Cardiac septum (tissue), 1 donor: ENCODE measurements at regions of chr5 and their contacts with region 1.

Region 1: GRCh38 chr5:126044111-126044668 is 379.0 kb upstream of the GRAMD2B start:
- DNase-seq: no peak

Region 2: DNA sequence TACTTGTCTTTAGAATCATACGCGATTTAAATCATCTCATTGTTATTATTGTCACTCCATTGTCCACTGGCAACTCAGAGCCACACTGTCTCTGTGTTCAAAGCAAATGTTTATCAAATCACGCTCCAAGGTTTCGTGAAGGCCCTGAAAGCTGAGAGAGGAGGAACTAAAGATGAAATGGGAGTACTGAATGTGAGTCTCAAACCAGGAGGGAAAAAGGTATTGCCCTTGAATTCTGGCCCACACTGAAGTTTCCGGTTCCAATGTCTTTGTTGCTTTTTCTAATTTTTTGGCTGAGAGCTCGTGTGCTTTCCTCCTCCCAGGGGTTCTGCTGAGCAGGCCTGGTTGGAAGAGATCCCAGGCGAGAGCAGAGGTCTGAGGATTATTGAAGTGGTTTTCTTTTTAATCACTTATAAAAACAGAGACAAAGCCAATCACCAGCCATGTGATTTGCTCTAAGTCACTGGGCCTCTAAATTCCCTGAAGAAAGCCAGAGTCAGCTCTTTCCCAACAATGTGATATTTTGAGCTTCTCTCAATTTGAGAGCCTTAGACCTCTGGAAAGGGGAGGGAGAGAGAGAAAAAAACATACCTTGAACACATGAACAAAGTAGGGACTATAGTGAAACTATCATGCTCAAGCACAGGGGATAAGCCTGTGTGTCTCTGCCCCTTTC is 41.8 kb before region 1 on chr5:
- intact Hi-C with region 1: loop called (anchors 5 kb)
- DNase-seq: peak; percentile 76

Region 3: GRCh38 chr5:126015235-126016181 is 28.7 kb before region 1 on chr5:
- intact Hi-C with region 1: no loop called
- DNase-seq: no peak